CD4-positive, alpha-beta memory T cell (primary cell): ENCODE measurements at regions of chr1 and their contacts with region 1.

Region 1: DNA sequence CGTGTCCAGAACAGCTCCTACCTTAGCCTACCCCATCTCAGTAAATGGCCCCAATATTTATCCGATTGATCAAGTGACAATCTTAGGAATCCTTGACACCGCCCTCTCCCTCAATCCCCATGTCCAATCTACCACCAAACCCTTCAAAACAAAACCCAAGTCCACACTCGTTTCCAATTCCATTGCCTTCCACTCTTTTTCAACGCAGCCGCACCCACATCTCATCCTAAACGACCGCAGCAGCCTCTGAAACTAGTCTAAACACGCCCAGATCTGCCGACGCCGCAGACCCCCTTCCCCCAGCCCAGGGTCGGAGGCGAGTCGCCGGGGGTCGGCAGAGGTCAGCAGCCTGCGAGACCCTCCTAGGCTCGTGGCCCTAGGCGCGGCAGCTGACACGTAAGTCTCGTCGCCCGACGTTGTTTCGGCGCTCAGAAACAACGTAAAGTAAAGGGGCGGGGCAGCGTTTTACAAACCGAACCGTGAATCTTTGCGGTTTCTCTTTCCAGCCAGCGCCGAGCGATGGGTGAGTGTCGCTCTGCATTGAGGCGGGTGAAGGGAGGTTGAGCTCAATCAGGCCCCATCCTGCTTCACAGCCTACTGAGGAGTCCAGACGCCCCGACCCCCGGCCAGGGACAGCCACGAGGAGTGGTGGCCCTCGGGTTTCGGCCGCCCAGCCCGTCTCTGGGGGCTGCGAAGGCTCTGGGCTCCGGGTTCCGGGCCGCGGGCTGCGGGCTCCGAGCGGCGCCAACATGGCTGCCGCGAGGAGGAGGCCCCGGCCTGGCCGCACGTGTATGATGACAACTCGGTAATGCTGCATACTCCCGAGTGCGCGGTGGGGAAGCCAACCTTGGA is at the start of gene RPS8:
- DNase-seq: peak; percentile 89 to 92 (median 91)
- H3K4me3 ChIP-seq: peak within 1 kb of the TSS; percentile 87 to 88
- H3K4me3 Mint-ChIP-seq: peak within 1 kb of the TSS; percentile 89 to 98 (median 94)
- H3K27ac ChIP-seq: peak within 1 kb of the TSS; percentile 78
- H3K27ac Mint-ChIP-seq: peak within 1 kb of the TSS; percentile 82 to 99 (median 98)
- H3K4me1 ChIP-seq: peaks cover 25% of the 10 kb centered on the region
- H3K4me1 Mint-ChIP-seq: peaks cover 20 to 56% (median 27%) of the 10 kb centered on the region in 4 donors
- H3K27me3 ChIP-seq: no peaks in the 10 kb centered on the region
- H3K27me3 Mint-ChIP-seq: no peaks in the 10 kb centered on the region
- total RNA-seq, gene RPS8: 2,728 to 2,811 TPM

Region 2: DNA sequence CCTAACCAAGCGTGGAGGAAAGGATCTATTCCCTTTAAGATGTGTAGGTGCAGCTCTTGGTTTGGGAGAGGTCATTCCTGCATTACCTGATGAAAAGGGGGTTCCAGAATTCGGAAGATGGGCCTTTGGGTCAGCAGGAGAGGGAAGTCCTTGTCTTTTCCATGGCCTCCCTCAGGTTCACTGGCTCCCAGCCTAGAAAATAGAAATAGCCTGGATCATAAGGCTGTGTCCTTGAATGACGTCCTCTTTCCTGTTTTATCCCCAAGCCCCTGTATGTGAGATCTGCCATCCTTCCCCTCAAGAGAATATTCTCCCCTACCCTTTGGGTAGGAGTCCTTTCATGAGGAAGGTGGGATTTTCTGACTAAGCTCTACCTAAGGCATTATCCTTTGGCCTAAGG is 14.4 kb before region 1 on chr1:
- CTCF ChIA-PET with region 1: no interaction called
- POLR2A ChIA-PET with region 1: interaction called, 16 read pairs
- intact Hi-C with region 1: no loop called
- DNase-seq: no peak
- H3K4me3 ChIP-seq: no peak overlapping the region
- H3K4me3 Mint-ChIP-seq: no peak overlapping the region
- H3K27ac ChIP-seq: no peak overlapping the region
- H3K27ac Mint-ChIP-seq: no peak overlapping the region
- H3K4me1 ChIP-seq: no peaks in the 10 kb centered on the region
- H3K4me1 Mint-ChIP-seq: peaks cover 0 to 4% (median 2%) of the 10 kb centered on the region in 4 donors
- H3K27me3 ChIP-seq: no peaks in the 10 kb centered on the region
- H3K27me3 Mint-ChIP-seq: no peaks in the 10 kb centered on the region

Region 3: DNA sequence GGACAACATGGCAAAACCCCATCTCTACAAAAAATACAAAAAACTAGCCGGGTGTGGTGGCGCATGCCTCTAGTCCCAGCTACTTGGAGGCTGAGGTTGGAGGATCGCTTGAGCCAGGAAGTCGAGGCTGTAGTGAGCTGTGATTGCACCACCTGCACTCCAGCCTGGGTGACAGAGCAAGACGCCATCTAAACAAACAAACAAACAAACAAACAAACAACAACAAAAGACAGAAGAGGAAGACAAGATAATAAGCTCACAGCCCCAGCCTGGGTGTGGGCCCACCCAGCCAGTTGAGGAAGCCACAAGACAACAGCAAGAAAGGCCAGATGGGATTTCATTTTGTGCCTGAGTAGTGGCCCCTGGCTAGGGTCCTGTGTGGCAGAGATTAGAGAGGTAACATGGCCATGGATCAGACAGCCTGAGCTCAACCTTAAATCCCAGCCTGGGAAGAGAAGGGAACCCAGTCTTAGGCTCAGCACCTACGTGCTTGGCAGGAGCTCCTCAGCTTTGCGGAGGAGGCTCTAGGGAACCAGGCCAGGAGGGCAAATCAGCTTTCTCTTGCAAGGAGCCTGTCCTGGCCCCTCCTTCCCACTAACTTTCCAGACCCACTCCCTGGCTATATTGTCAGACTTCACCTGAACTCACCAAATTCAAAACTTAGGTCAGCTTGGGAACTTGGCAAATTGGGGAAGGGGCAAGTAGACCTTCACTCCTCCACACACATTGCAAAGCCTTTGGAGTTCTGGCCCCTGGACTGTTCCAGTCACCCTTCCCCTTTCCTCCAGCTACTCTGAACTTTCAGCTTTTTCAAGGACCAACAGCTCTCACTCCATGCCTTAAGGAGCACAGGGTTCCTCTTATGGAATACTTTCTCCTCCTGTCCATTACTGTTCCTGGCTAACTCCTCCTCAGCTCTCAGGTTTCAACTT is 17.7 kb after region 1 on chr1:
- CTCF ChIA-PET with region 1: interaction called, 39 read pairs
- POLR2A ChIA-PET with region 1: interaction called, 110 read pairs
- intact Hi-C with region 1: no loop called
- DNase-seq: no peak
- H3K4me3 ChIP-seq: no peak overlapping the region
- H3K4me3 Mint-ChIP-seq: no peak overlapping the region
- H3K27ac ChIP-seq: no peak overlapping the region
- H3K27ac Mint-ChIP-seq: peak overlapping the region in 3 of 7 donors; percentile 44 to 91 (median 79)
- H3K4me1 ChIP-seq: no peaks in the 10 kb centered on the region
- H3K4me1 Mint-ChIP-seq: peaks cover 0 to 5% (median 2%) of the 10 kb centered on the region in 4 donors
- H3K27me3 ChIP-seq: no peaks in the 10 kb centered on the region
- H3K27me3 Mint-ChIP-seq: no peaks in the 10 kb centered on the region

Region 4: GRCh38 chr1:44807262-44808062 is 32.2 kb after region 1 on chr1 and contains the start of gene DYNLT4:
- CTCF ChIA-PET with region 1: interaction called, 4 read pairs
- POLR2A ChIA-PET with region 1: interaction called, 126 read pairs
- intact Hi-C with region 1: no loop called
- DNase-seq: peak; percentile 91 to 98 (median 91)
- H3K4me3 ChIP-seq: peak within 1 kb of the TSS; percentile 41 to 57
- H3K4me3 Mint-ChIP-seq: peak within 1 kb of the TSS; percentile 74 to 87 (median 80)
- H3K27ac ChIP-seq: peak within 1 kb of the TSS; percentile 98
- H3K27ac Mint-ChIP-seq: peak within 1 kb of the TSS; percentile 98 to 100 (median 99)
- H3K4me1 ChIP-seq: peaks cover 91% of the 10 kb centered on the region
- H3K4me1 Mint-ChIP-seq: peaks cover 57 to 94% (median 73%) of the 10 kb centered on the region in 4 donors
- H3K27me3 ChIP-seq: no peaks in the 10 kb centered on the region
- H3K27me3 Mint-ChIP-seq: no peaks in the 10 kb centered on the region
- total RNA-seq, gene DYNLT4: 0.47 TPM in 1 of 2 experiments, not detected in the other

Region 5: DNA sequence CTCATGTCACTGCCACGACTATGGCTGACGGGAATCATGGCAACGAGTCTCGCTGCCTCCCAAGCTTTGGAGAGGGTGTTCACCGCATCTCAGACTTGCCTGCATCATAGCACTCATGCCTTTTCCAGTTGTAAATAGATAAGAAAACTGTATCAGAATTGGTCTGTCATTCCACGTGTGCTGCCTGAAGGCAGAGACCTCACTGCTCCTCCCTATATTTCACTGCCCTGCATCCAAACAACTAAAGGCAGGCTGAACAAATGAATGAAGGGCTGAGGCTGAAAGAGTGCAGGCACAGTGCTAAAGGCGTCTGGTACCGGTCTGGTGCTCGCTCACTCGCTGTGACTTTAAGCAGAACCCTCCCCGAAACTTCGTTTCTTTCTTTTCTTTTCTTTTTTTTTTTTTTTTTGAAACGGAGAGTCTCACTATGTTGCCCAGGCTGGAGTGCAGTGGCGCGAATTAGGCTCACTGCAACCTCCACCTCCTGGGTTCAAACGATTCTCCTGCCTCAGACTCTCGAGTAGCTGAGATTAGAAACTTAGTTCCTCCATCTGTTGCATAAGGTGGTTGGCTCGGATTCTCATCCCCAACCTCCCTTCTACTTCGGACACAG is 210.5 kb after region 1 on chr1:
- CTCF ChIA-PET with region 1: interaction called, 7 read pairs
- POLR2A ChIA-PET with region 1: interaction called, 12 read pairs
- intact Hi-C with region 1: loop called (anchors 1 kb)
- DNase-seq: no peak
- H3K4me3 ChIP-seq: peak overlapping the region; percentile 67 to 70
- H3K4me3 Mint-ChIP-seq: peak overlapping the region; percentile 98 to 100 (median 99)
- H3K27ac ChIP-seq: peak overlapping the region; percentile 59
- H3K27ac Mint-ChIP-seq: peak overlapping the region; percentile 34 to 99 (median 96)
- H3K4me1 ChIP-seq: peaks cover 11% of the 10 kb centered on the region
- H3K4me1 Mint-ChIP-seq: peaks cover 15 to 26% (median 21%) of the 10 kb centered on the region in 4 donors
- H3K27me3 ChIP-seq: no peaks in the 10 kb centered on the region
- H3K27me3 Mint-ChIP-seq: no peaks in the 10 kb centered on the region

Region 6: DNA sequence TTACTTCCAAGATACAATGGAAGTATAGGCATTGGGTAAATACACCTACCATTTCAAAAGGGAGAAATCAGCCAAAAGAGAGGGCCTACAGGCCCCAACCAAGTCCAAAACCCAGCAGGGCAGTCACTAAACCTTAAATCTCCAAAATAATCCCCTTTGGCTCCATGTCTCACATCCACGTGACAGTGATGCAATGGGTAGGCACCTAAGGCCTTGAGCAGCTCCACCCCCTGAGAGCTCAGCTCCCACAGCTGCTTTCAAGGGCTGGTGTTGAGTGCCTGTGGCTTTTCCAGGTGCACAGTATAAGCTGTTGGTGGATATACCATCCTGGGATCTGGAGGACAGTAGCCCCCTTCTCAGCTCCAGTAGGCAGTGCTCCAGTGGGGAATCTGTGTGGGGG is 309.3 kb after region 1 on chr1:
- CTCF ChIA-PET with region 1: no interaction called
- POLR2A ChIA-PET with region 1: no interaction called
- intact Hi-C with region 1: no loop called
- DNase-seq: no peak
- H3K4me3 ChIP-seq: no peak overlapping the region
- H3K4me3 Mint-ChIP-seq: no peak overlapping the region
- H3K27ac ChIP-seq: no peak overlapping the region
- H3K27ac Mint-ChIP-seq: no peak overlapping the region
- H3K4me1 ChIP-seq: no peaks in the 10 kb centered on the region
- H3K4me1 Mint-ChIP-seq: no peaks in the 10 kb centered on the region
- H3K27me3 ChIP-seq: no peaks in the 10 kb centered on the region
- H3K27me3 Mint-ChIP-seq: no peaks in the 10 kb centered on the region